Activated CD4-positive, alpha-beta memory T cell treated with anti-CD3 and anti-CD28 coated beads for 36 hours (primary cell): ENCODE measurements at regions of chr3 and their contacts with region 1.

Region 1: GRCh38 chr3:47824541-47825473 is 21.9 kb downstream of the DHX30 start:
- DNase-seq: peak; percentile 85
- H3K4me3 Mint-ChIP-seq: peak overlapping the region; percentile 87
- H3K27ac Mint-ChIP-seq: peak overlapping the region; percentile 84
- H3K4me1 Mint-ChIP-seq: peaks cover 30% of the 10 kb centered on the region
- H3K27me3 Mint-ChIP-seq: no peaks in the 10 kb centered on the region

Region 2: GRCh38 chr3:47455806-47456452 is 368.9 kb before region 1 on chr3:
- CTCF ChIA-PET with region 1: no interaction called
- POLR2A ChIA-PET with region 1: no interaction called
- intact Hi-C with region 1: no loop called
- DNase-seq: no peak
- H3K4me3 Mint-ChIP-seq: no peak overlapping the region
- H3K27ac Mint-ChIP-seq: no peak overlapping the region
- H3K4me1 Mint-ChIP-seq: peaks cover 12% of the 10 kb centered on the region
- H3K27me3 Mint-ChIP-seq: no peaks in the 10 kb centered on the region

Region 3: DNA sequence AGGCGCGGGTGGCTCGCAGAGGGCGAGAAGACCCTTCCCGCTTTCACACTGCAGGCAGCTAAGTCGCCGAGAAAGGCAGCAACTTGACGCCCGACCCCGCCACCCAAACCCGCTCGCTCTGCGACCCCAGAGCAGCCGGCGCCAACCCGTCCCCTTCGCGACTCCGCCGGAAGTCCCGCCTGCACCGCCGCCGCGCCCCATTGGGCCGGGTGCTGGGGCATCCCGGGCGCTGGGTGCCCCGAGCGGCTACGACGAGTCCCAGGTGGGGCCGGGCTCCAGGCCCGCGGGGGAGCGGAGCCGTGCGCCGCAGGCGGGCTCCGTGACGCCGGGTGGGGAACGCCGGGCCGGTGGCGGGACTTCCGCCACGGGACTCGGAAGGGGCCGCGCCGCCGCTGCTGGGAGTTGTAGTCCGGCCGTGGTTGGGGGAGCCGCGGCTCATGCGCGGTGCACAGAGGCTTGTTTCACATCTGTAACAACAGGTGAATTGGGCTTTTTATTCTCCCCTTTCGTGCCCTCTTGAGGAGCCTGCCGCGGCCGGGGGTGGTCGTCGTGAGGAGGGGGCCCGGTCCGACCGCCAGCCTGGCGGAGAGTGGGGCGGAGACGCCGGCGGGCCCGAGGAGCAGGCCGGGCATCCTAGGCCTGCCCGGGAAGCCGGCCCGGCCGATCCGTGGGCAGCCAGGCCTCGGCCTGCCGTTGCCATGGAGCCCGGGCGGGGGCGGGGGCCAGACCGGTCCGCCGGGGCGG is 21.9 kb before region 1 on chr3 and contains the start of gene DHX30:
- CTCF ChIA-PET with region 1: interaction called, 28 read pairs
- POLR2A ChIA-PET with region 1: interaction called, 10 read pairs
- intact Hi-C with region 1: loop called (anchors 2 kb)
- DNase-seq: peak; percentile 90
- H3K4me3 Mint-ChIP-seq: peak within 1 kb of the TSS; percentile 92
- H3K27ac Mint-ChIP-seq: peak within 1 kb of the TSS; percentile 87
- H3K4me1 Mint-ChIP-seq: peaks cover 21% of the 10 kb centered on the region
- H3K27me3 Mint-ChIP-seq: no peaks in the 10 kb centered on the region
- total RNA-seq, gene DHX30: 76.7 to 77.5 TPM

Region 4: DNA sequence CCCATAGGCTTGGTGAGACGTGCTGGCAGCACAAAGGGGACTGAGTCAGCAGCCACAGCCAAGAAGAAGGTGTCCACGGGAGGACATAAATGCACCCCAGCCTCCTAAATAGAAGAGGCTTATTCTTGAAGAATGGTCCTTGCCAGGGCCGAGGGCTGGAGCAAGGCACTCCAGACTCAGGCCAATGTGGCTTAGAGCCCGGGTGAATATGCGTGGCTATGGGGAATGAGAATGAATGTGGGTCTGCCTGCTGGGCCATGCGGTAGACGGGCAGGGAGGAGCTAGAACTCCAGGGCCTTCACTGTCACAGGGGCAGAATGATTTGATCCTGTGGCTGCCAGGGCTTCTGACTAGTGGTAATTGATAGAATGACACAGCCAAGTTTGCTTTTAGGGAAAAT is 12.2 kb after region 1 on chr3:
- CTCF ChIA-PET with region 1: interaction called, 64 read pairs
- POLR2A ChIA-PET with region 1: interaction called, 10 read pairs
- intact Hi-C with region 1: no loop called
- DNase-seq: no peak
- H3K4me3 Mint-ChIP-seq: no peak overlapping the region
- H3K27ac Mint-ChIP-seq: no peak overlapping the region
- H3K4me1 Mint-ChIP-seq: no peaks in the 10 kb centered on the region
- H3K27me3 Mint-ChIP-seq: no peaks in the 10 kb centered on the region

Region 5: GRCh38 chr3:47989981-47990440 is 165.2 kb after region 1 on chr3:
- CTCF ChIA-PET with region 1: interaction called, 39 read pairs
- POLR2A ChIA-PET with region 1: no interaction called
- intact Hi-C with region 1: loop called (anchors 1 kb)
- DNase-seq: peak; percentile 79
- H3K4me3 Mint-ChIP-seq: no peak overlapping the region
- H3K27ac Mint-ChIP-seq: no peak overlapping the region
- H3K4me1 Mint-ChIP-seq: peaks cover 6% of the 10 kb centered on the region
- H3K27me3 Mint-ChIP-seq: no peaks in the 10 kb centered on the region

Region 6: DNA sequence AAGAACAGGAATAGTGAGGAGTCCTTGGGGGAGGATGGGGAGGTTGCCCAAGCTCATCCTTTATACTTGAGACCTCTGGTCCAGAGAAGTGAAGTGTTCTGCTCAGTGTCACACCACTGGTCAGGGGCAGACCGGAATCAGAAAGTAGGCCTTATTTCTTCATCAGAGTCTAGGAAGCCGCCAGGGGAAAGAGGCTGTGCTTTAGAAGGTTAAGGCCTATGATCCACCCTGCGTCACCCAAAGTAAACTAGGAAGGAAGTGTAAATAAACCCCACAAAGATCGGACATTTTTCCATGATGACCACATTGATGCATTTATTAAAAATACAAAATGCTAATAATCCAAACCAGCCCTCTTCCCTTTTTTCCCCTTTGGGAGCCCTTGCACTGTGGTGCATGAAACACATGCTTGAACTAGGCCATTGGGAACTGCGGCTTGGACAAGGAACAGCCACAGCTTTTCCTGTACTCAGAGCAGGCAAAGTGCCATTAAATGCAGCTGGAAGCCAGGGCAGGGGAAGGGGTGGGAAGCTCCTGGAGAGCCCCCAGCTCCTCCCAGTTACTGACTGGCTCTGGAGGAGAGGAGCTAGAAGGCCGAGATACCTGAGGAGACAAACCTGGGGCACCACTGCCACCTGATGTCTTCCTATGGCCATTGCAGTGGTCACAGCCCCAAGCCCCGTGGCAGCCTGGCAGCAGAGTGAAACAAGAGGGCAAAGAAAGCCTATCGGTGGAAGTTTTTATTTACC is 326.4 kb after region 1 on chr3:
- CTCF ChIA-PET with region 1: interaction called, 7 read pairs
- POLR2A ChIA-PET with region 1: no interaction called
- intact Hi-C with region 1: loop called (anchors 10 kb)
- DNase-seq: peak; percentile 80
- H3K4me3 Mint-ChIP-seq: no peak overlapping the region
- H3K27ac Mint-ChIP-seq: no peak overlapping the region
- H3K4me1 Mint-ChIP-seq: no peaks in the 10 kb centered on the region
- H3K27me3 Mint-ChIP-seq: no peaks in the 10 kb centered on the region